Activated CD4-positive, alpha-beta T cell treated with anti-CD3 and anti-CD28 coated beads for 36 hours (primary cell): ENCODE measurements at regions of chr4 and their contacts with region 1.

Region 1: DNA sequence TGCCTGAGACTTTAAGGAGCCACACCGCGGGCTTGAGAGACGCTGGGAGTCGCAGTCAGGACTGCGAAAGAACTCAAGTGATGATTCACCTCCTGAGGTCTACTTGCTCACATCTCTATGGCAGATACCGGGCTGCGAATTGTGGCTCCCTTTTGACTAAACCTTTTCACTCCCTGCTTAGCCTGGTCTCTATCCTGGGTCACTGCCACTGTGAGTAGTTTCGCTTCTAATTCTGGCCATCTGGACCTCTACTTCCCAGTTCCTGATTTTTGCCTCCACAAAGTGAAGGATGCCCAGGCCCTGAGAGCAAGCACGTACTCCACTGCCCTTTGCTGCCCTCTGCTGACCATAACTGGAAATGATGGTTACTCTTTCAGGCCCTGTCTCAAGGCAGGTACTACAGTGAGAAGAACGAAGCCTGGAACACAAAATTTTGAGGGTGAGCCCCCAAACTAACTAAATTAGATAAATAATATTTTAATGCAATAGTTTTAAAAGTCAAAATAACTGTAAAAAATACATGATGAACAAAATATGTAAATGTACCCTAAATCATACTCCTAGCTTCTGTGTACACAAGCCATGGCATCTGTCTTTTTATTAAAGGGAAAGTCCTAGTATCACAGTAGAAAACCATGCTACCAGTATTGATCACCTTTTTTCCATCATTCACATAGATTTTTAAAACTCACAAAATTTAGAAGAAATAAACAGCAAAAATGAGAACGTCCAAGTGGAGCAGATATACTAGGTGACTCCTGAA is 16.7 kb downstream of the MAD2L1 start:
- DNase-seq: peak; percentile 79
- ATAC-seq: peak; percentile 94
- H3K4me3 Mint-ChIP-seq: no peak overlapping the region
- H3K27ac Mint-ChIP-seq: no peak overlapping the region
- H3K4me1 Mint-ChIP-seq: peaks cover 2% of the 10 kb centered on the region
- H3K27me3 Mint-ChIP-seq: no peaks in the 10 kb centered on the region

Region 2: GRCh38 chr4:118981839-118982381 is 1068.0 kb before region 1 on chr4:
- CTCF ChIA-PET with region 1: no interaction called
- POLR2A ChIA-PET with region 1: no interaction called
- intact Hi-C with region 1: loop called (anchors 2 kb)
- DNase-seq: peak; percentile 73
- ATAC-seq: peak; percentile 60
- H3K4me3 Mint-ChIP-seq: no peak overlapping the region
- H3K27ac Mint-ChIP-seq: no peak overlapping the region
- H3K4me1 Mint-ChIP-seq: no peaks in the 10 kb centered on the region
- H3K27me3 Mint-ChIP-seq: peaks cover 7% of the 10 kb centered on the region

Region 3: DNA sequence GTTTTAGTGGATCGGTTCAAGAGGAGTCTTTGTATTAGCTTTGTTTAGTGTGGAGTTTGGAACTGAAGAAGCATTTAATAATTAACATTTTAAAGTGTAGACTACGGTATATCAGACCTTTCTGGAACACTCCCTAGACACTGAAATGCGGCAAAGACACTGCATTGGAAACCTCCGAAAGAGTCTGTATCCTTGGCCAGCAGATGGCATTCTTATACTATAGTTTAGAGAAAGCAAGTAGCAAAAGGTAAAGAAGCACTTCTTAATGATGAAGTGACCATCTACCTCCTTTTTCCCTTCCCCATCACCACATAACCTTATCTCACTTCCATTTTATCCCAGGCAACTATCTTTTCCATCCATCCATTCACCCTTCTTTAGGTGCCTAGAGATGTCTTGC is 735.6 kb before region 1 on chr4:
- CTCF ChIA-PET with region 1: no interaction called
- POLR2A ChIA-PET with region 1: no interaction called
- intact Hi-C with region 1: loop called (anchors 1 to 2 kb)
- DNase-seq: peak; percentile 11
- ATAC-seq: peak; percentile 51
- H3K4me3 Mint-ChIP-seq: no peak overlapping the region
- H3K27ac Mint-ChIP-seq: no peak overlapping the region
- H3K4me1 Mint-ChIP-seq: no peaks in the 10 kb centered on the region
- H3K27me3 Mint-ChIP-seq: peaks cover 9% of the 10 kb centered on the region

Region 4: DNA sequence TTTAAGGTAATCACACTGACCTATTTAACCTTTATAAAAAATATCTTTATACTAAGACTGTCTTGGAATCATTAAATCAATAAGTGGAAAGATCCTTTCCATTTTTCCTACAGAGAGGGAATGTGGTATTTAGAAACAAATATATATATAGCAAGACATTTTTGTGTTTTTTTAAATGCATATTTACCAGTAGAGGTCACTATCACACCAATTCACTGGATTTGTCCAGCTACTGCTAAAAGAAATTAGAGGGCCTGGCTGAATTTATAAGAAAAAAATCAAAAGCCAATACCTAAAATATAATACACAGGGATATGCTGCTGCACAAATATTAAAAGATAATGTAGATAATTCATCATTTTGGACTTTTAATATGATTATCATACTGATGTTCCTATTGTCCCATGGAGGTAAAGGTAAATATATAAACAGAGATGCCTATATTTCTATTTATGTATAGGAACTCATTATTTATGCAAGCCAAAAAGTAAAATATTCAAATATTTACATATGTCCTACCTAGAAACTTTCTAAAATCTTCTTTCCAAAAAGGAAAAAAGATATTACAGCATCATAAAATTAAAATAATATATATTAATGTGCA is 490.8 kb before region 1 on chr4:
- CTCF ChIA-PET with region 1: interaction called, 5 read pairs
- POLR2A ChIA-PET with region 1: no interaction called
- intact Hi-C with region 1: loop called (anchors 1 to 5 kb)
- DNase-seq: no peak
- ATAC-seq: no peak
- H3K4me3 Mint-ChIP-seq: no peak overlapping the region
- H3K27ac Mint-ChIP-seq: no peak overlapping the region
- H3K4me1 Mint-ChIP-seq: no peaks in the 10 kb centered on the region
- H3K27me3 Mint-ChIP-seq: no peaks in the 10 kb centered on the region

Region 5: DNA sequence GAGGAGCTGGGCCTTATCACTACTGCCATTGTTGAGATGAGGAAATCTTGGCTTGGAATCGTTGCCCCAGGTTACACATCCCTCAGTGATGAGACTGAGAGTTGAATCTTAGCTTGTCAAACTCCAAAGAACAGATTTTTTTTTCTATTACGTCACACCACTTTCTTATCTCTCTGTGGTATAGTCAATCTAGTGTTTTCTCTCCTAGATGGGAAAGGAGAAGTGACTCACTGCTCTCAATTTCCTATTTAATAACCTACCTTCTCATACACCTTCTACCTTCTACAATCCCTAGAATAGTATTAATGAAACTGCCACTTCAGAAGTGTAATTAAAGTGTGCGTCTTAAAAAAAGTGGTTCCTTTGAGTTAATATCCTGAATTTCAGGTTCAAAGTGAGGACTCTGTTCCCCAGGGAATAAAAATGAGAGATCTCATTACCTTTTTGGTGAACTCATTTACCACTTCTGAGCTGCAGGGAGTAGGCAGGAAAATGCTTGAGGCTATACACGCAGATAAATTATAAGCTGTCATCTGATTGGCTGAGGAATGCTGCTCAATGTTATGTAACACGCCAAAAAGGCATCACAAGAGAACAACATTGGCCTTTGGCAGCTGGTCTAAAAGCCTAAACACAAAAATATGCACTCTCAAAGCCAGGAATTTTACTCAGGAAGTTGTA is 42.6 kb before region 1 on chr4:
- CTCF ChIA-PET with region 1: no interaction called
- POLR2A ChIA-PET with region 1: no interaction called
- intact Hi-C with region 1: no loop called
- DNase-seq: no peak
- ATAC-seq: peak; percentile 51
- H3K4me3 Mint-ChIP-seq: no peak overlapping the region
- H3K27ac Mint-ChIP-seq: no peak overlapping the region
- H3K4me1 Mint-ChIP-seq: peaks cover 3% of the 10 kb centered on the region
- H3K27me3 Mint-ChIP-seq: peaks cover 19% of the 10 kb centered on the region